Panc1 (cell line): ENCODE measurements at regions of chr12 and their contacts with region 1.

Region 1: GRCh38 chr12:50084775-50085614 is at the start of gene SMARCD1:
- DNase-seq: peak; percentile 72
- ATAC-seq: peak; percentile 96
- H3K4me3 ChIP-seq: peak within 1 kb of the TSS; percentile 80 to 88
- H3K27ac ChIP-seq: peak within 1 kb of the TSS; percentile 97
- H3K4me1 ChIP-seq: peaks cover 6% of the 10 kb centered on the region; the same call in 1 of the 2 replicates
- H3K27me3 ChIP-seq: no peaks in the 10 kb centered on the region
- CTCF ChIP-seq: peak; percentile 93
- total RNA-seq, gene SMARCD1: 84.9 TPM

Region 2: DNA sequence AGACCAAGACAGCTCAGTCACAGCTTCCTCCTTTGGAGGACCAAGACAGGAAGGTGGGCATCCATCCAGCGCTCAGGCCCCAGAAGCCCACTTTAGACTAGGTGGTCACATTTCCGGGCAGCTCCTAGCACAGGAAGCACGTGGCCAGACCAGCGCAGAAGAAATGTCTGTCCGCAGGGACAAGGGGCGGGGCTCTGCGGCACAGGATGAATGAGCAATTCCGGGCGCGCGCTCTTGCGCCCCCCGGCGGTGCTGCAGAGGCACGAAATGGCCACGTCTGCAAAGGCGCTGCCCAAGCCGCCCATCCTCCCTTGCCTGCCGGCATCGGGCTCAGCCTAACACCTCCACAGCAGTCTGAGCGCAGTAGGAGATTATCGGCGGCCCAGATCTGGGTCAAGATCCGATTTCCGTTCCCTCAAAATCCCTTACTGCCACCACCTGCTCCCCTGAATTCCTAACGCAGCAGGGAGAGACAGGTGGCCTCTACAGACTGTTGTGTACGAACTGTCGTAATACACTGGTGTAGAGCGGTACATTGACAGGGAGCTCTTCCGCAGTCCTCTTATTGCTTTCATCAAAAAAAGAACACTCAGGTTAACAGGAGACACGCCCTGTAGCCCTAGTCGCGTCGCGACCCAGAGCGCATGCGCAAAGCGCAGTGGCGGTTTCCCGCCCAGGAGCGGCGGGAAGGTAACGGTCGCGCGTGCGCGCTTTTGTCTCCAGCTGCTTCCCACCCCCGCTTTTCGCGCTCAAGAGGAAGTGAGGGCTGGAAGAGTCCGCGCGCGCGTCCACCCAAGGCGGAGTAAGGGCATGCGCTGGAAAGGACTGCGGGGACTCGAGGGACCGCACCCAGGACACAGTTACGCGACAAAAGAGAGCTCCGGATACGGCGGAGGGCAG is 954.6 kb before region 1 on chr12:
- CTCF ChIA-PET with region 1: no interaction called
- POLR2A ChIA-PET with region 1: no interaction called
- in situ Hi-C with region 1: no loop called
- intact Hi-C with region 1: no loop called
- DNase-seq: peak; percentile 83
- ATAC-seq: peak; percentile 65
- H3K4me3 ChIP-seq: peak overlapping the region; percentile 97 to 100
- H3K27ac ChIP-seq: peak overlapping the region; percentile 99
- H3K4me1 ChIP-seq: peaks cover 14% of the 10 kb centered on the region
- H3K27me3 ChIP-seq: no peaks in the 10 kb centered on the region
- CTCF ChIP-seq: peak; percentile 97

Region 3: DNA sequence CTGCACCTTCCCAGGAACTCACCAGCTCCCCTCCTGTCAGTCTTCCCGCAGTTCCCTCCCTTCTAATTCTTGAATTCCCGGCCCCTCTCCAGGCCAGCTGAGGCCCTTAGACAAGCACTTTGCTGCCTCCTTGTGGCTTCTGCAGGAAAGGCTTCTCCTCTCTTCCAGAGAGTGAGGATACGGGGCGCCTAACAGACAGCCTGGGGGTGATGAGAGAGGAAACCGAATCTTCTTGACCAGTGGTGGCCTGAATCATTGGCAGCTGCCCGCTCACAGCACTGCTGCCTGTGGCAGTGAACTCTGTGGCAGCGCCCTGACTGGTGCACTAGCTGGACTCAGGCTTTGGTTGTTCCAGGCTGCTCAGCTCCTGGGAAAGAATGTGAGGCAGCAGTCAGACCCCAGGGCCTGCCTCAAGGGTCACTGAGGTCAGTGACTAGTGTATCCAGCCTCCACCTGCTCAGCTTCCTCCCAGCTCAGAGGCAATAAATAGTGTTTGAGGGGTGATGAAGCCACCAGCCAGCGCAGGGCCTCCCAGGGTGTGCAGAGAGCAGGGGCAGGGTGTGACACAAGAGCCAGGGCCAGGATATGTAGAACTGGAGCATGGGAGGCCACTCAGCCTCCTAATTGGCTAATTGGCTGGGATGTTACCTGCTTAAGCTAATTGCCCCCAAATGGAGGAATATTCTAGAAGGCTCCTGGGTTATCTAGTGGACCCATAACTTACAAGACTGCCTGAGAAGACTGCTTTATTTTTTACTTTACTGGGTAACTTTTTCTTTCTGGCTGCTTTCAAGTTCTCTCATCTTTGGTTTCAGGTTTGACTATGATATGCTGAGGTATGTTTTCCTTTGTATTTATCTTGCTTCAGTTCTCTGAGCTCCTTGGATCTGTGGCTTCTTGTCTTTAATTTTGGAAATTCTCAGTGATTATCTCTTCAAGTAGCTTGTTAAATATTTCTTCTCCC is 504.1 kb before region 1 on chr12:
- CTCF ChIA-PET with region 1: no interaction called
- POLR2A ChIA-PET with region 1: no interaction called
- in situ Hi-C with region 1: no loop called
- intact Hi-C with region 1: no loop called
- DNase-seq: peak; percentile 27
- ATAC-seq: peak; percentile 96
- H3K4me3 ChIP-seq: no peak overlapping the region
- H3K27ac ChIP-seq: no peak overlapping the region
- H3K4me1 ChIP-seq: no peaks in the 10 kb centered on the region
- H3K27me3 ChIP-seq: no peaks in the 10 kb centered on the region
- CTCF ChIP-seq: peak; percentile 92

Region 4: DNA sequence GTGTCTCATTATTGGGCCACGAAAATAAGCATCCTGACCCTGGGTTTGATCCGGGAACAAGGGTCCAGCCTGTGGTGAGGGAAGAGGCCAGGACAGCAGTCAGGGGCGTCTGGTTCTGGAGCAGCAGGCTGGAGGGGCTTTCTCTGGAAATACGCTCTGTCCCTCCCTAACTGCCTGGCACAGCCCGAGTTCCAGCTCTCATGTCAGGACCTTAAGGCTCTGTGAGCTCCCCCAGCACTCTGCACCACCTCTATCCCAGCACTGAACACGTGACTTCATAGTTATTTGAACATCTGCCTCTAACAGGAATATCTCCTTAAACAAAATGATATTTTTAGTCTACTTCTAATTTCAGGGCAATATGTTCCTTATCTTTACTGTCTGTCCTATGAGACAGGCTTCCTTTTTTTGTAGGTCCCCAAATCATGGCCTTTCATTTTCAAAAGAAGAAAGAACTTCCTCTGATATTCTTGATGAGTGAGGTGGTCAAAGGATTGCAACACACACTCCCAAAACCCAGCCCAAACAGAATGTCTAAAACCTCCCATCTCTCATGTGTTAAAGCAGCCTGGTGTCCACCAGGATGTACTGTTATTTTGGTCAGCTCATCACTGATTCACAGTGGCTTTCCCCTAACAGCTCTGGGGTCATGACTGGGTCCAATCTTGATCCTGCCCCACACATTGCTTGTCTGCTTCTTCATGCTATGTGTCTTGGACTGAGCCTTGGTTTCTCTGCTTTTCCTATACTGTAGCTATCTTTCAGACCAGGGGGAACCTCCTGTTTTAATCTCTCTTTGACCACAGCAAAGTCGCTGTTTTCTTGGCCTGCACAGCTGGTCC is 102.5 kb before region 1 on chr12:
- CTCF ChIA-PET with region 1: interaction called, 5 read pairs
- POLR2A ChIA-PET with region 1: interaction called, 10 read pairs
- in situ Hi-C with region 1: no loop called
- intact Hi-C with region 1: no loop called
- DNase-seq: no peak
- ATAC-seq: no peak
- H3K4me3 ChIP-seq: no peak overlapping the region
- H3K27ac ChIP-seq: no peak overlapping the region
- H3K4me1 ChIP-seq: peaks cover 4% of the 10 kb centered on the region
- H3K27me3 ChIP-seq: no peaks in the 10 kb centered on the region
- CTCF ChIP-seq: no peak

Region 5: GRCh38 chr12:50117057-50117622 is 32.1 kb after region 1 on chr12:
- CTCF ChIA-PET with region 1: interaction called, 11 read pairs
- POLR2A ChIA-PET with region 1: no interaction called
- in situ Hi-C with region 1: no loop called
- intact Hi-C with region 1: no loop called
- DNase-seq: no peak
- ATAC-seq: no peak
- H3K4me3 ChIP-seq: no peak overlapping the region
- H3K27ac ChIP-seq: no peak overlapping the region
- H3K4me1 ChIP-seq: peaks cover 3% of the 10 kb centered on the region; the same call in 1 of the 2 replicates
- H3K27me3 ChIP-seq: no peaks in the 10 kb centered on the region
- CTCF ChIP-seq: no peak

Region 6: GRCh38 chr12:50314629-50315312 is 229.8 kb after region 1 on chr12:
- CTCF ChIA-PET with region 1: no interaction called
- POLR2A ChIA-PET with region 1: no interaction called
- in situ Hi-C with region 1: no loop called
- intact Hi-C with region 1: loop called (anchors 10 kb)
- DNase-seq: peak; percentile 46
- ATAC-seq: peak; percentile 60; the same call in 1 of the 2 replicates
- H3K4me3 ChIP-seq: no peak overlapping the region
- H3K27ac ChIP-seq: peak overlapping the region; percentile 78
- H3K4me1 ChIP-seq: peaks cover 20% of the 10 kb centered on the region
- H3K27me3 ChIP-seq: no peaks in the 10 kb centered on the region
- CTCF ChIP-seq: peak; percentile 81

Region 7: GRCh38 chr12:50351120-50352043 is 266.4 kb after region 1 on chr12:
- CTCF ChIA-PET with region 1: no interaction called
- POLR2A ChIA-PET with region 1: no interaction called
- in situ Hi-C with region 1: no loop called
- intact Hi-C with region 1: no loop called
- DNase-seq: no peak
- ATAC-seq: peak; percentile 69
- H3K4me3 ChIP-seq: no peak overlapping the region
- H3K27ac ChIP-seq: no peak overlapping the region
- H3K4me1 ChIP-seq: no peaks in the 10 kb centered on the region
- H3K27me3 ChIP-seq: no peaks in the 10 kb centered on the region
- CTCF ChIP-seq: no peak

Region 8: DNA sequence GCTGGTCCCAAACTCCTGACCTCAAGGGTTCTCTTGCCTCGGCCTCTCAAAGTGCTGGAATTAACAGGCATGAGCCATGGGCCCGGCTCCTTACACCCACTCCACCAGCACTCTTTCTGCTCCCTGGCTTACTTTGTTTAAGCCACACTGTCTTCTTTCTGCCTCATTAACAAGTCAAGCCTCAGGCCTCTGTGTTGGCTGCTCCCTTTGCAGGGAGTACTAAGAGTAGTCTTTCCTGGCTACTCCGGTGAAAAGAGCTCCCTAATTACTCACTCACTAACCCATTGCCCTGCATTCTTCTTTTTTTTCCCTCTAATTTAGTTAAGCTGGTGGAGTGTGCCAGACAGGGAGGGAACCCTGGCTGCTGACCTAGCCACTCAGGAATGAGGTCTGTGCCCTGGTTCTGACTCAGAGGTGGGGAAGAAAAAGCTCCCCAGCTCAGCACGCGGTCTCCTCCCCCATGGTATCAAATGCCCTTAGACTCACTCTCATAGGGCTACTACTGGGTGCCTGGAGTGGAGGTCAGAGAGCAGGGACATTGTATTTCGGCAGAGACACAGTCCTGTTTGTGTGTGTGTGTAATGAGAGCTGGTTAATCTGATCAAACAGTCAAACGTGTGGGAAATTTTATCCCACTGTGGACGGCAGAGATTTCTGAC is 1286.4 kb after region 1 on chr12:
- CTCF ChIA-PET with region 1: no interaction called
- POLR2A ChIA-PET with region 1: no interaction called
- in situ Hi-C with region 1: no loop called
- intact Hi-C with region 1: no loop called
- DNase-seq: peak; percentile 89
- ATAC-seq: peak; percentile 98
- H3K4me3 ChIP-seq: peak overlapping the region in 1 of 2 experiments; percentile 21; a peak in 1 of 4 replicates
- H3K27ac ChIP-seq: peak overlapping the region; percentile 69
- H3K4me1 ChIP-seq: peaks cover 10% of the 10 kb centered on the region
- H3K27me3 ChIP-seq: no peaks in the 10 kb centered on the region
- CTCF ChIP-seq: no peak